B cell (primary cell): ENCODE measurements at regions of chr6 and their contacts with region 1.

Region 1: GRCh38 chr6:30344868-30345671 is at the start of gene RPP21:
- DNase-seq: peak; percentile 91
- ATAC-seq: peak; percentile 99
- H3K4me3 ChIP-seq: peak within 1 kb of the TSS; percentile 46 to 98 (median 85)
- H3K4me3 Mint-ChIP-seq: peak within 1 kb of the TSS; percentile 97
- H3K27ac ChIP-seq: peak within 1 kb of the TSS; percentile 75 to 91
- H3K27ac Mint-ChIP-seq: peak within 1 kb of the TSS; percentile 98
- H3K4me1 ChIP-seq: peaks cover 24 to 30% of the 10 kb centered on the region in 2 donors
- H3K4me1 Mint-ChIP-seq: peaks cover 40% of the 10 kb centered on the region
- H3K27me3 ChIP-seq: no peaks in the 10 kb centered on the region
- H3K27me3 Mint-ChIP-seq: no peaks in the 10 kb centered on the region
- CTCF ChIP-seq: no peak
- total RNA-seq, gene RPP21: 48.1 and 50.6 TPM in 2 replicates

Region 2: GRCh38 chr6:30259140-30260035 is 85.7 kb before region 1 on chr6:
- CTCF ChIA-PET with region 1: no interaction called
- POLR2A ChIA-PET with region 1: no interaction called
- intact Hi-C with region 1: loop called (anchors 1 kb)
- DNase-seq: peak; percentile 94
- ATAC-seq: peak; percentile 96
- H3K4me3 ChIP-seq: peak overlapping the region; percentile 25 to 100 (median 84)
- H3K4me3 Mint-ChIP-seq: peak overlapping the region; percentile 99
- H3K27ac ChIP-seq: peak overlapping the region; percentile 93 to 98
- H3K27ac Mint-ChIP-seq: peak overlapping the region; percentile 98
- H3K4me1 ChIP-seq: peaks cover 19 to 27% of the 10 kb centered on the region in 2 donors
- H3K4me1 Mint-ChIP-seq: peaks cover 32% of the 10 kb centered on the region
- H3K27me3 ChIP-seq: no peaks in the 10 kb centered on the region
- H3K27me3 Mint-ChIP-seq: no peaks in the 10 kb centered on the region
- CTCF ChIP-seq: peak; percentile 41

Region 3: DNA sequence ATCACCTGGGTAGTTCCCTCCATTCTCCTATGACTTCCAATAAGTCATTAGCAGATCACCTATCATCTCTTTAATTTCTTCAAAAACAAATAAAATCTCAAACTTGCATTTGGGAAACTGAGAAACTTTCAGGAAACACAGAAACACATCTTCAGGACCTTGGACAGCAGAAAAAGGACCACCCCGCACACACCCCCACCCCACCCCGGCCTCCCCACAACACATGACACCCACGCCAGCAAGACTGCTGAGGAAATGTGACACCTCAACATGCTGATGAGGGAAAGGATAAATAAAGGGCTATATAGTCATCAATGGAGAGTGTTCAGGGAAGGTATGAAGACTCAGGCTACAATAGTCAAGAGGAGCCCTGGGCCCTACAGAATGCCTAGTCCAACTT is 34.0 kb before region 1 on chr6:
- CTCF ChIA-PET with region 1: no interaction called
- POLR2A ChIA-PET with region 1: no interaction called
- intact Hi-C with region 1: no loop called
- DNase-seq: no peak
- ATAC-seq: no peak
- H3K4me3 ChIP-seq: no peak overlapping the region
- H3K4me3 Mint-ChIP-seq: no peak overlapping the region
- H3K27ac ChIP-seq: no peak overlapping the region
- H3K27ac Mint-ChIP-seq: no peak overlapping the region
- H3K4me1 ChIP-seq: no peaks in the 10 kb centered on the region
- H3K4me1 Mint-ChIP-seq: peaks cover 15% of the 10 kb centered on the region
- H3K27me3 ChIP-seq: no peaks in the 10 kb centered on the region
- H3K27me3 Mint-ChIP-seq: no peaks in the 10 kb centered on the region
- CTCF ChIP-seq: no peak

Region 4: DNA sequence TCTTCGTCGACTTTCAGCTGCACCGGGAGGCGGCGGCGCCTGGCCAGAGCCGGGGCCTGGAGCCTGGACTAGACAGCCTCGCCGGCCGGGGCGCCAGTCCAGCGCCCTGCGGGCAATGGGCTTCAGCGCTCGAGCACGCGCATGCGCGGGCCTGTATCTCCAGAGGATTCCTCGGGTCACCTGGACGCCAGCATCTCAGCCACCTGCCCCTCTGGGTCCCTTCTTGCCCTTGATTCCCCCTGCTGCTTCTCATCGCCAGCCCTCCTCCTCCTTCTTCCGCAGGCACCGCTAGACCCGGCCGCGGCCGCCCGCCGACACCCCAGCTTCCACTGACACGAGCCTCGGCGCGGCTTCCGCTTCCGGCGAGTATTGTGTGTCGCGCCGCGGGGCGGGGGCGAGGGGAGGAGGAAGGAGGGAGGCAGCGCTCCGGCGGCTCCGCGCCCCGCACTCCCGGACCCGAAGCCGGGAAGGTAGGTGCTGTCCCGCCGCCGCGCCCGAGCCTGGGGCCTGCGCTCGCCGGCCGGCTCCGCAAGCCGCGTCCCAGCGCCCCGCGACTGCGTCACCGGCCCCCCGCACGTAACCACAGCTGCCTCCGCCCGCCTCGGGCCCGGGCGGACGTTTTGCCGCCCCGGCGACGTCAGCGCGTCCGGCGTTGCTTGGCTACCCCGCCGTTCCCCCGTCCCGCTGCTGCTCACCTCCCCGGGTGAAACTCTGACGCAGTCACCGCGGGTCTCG is 18.4 kb before region 1 on chr6 and contains the start of gene TRIM39:
- CTCF ChIA-PET with region 1: no interaction called
- POLR2A ChIA-PET with region 1: interaction called, 6 read pairs
- intact Hi-C with region 1: loop called (anchors 1 kb)
- DNase-seq: peak; percentile 96
- ATAC-seq: peak; percentile 69
- H3K4me3 ChIP-seq: peak within 1 kb of the TSS; percentile 72 to 97 (median 90)
- H3K4me3 Mint-ChIP-seq: peak within 1 kb of the TSS; percentile 99
- H3K27ac ChIP-seq: peak within 1 kb of the TSS; percentile 98 to 99
- H3K27ac Mint-ChIP-seq: peak within 1 kb of the TSS; percentile 99
- H3K4me1 ChIP-seq: peaks cover 21 to 31% of the 10 kb centered on the region in 2 donors
- H3K4me1 Mint-ChIP-seq: peaks cover 52% of the 10 kb centered on the region
- H3K27me3 ChIP-seq: no peaks in the 10 kb centered on the region
- H3K27me3 Mint-ChIP-seq: no peaks in the 10 kb centered on the region
- CTCF ChIP-seq: no peak
- total RNA-seq, gene TRIM39: 28.2 and 31.4 TPM in 2 replicates

Region 5: GRCh38 chr6:30357678-30358540 is 12.8 kb after region 1 on chr6:
- CTCF ChIA-PET with region 1: interaction called, 3 read pairs
- POLR2A ChIA-PET with region 1: no interaction called
- intact Hi-C with region 1: loop called (anchors 1 kb)
- DNase-seq: peak; percentile 81
- ATAC-seq: peak; percentile 82
- H3K4me3 ChIP-seq: peak overlapping the region; percentile 28 to 64 (median 51)
- H3K4me3 Mint-ChIP-seq: peak overlapping the region; percentile 93
- H3K27ac ChIP-seq: no peak overlapping the region
- H3K27ac Mint-ChIP-seq: no peak overlapping the region
- H3K4me1 ChIP-seq: peaks cover 7 to 12% of the 10 kb centered on the region in 2 donors
- H3K4me1 Mint-ChIP-seq: peaks cover 9% of the 10 kb centered on the region
- H3K27me3 ChIP-seq: peaks cover 0 to 55% (median 32%) of the 10 kb centered on the region in 4 experiments
- H3K27me3 Mint-ChIP-seq: peaks cover 51% of the 10 kb centered on the region
- CTCF ChIP-seq: peak; percentile 90